ENCODE measurements at regions of chr15 and their contacts with region 1.

Region 1: GRCh38 chr15:31435261-31435911 is 108.8 kb downstream of the KLF13 start:
- DNase-seq: peak; percentile 82
- ATAC-seq: peak; percentile 87
- H3K4me3 Mint-ChIP-seq: no peak overlapping the region
- H3K27ac Mint-ChIP-seq: no peak overlapping the region
- H3K4me1 Mint-ChIP-seq: peaks cover 18% of the 10 kb centered on the region
- H3K27me3 Mint-ChIP-seq: peaks cover 8% of the 10 kb centered on the region
- CTCF ChIP-seq: 0 out of 2 replicates have a peak, but pooled peaks have one; percentile 27

Region 2: GRCh38 chr15:31200735-31201151 is 234.6 kb before region 1 on chr15:
- CTCF ChIA-PET with region 1: interaction called, 19 read pairs
- POLR2A ChIA-PET with region 1: no interaction called
- DNase-seq: peak; percentile 76
- ATAC-seq: peak; percentile 80
- H3K4me3 Mint-ChIP-seq: no peak overlapping the region
- H3K27ac Mint-ChIP-seq: no peak overlapping the region
- H3K4me1 Mint-ChIP-seq: peaks cover 14% of the 10 kb centered on the region
- H3K27me3 Mint-ChIP-seq: no peaks in the 10 kb centered on the region
- CTCF ChIP-seq: no peak

Region 3: GRCh38 chr15:31236184-31237042 is 199.0 kb before region 1 on chr15:
- CTCF ChIA-PET with region 1: interaction called, 11 read pairs
- POLR2A ChIA-PET with region 1: no interaction called
- DNase-seq: no peak
- ATAC-seq: no peak
- H3K4me3 Mint-ChIP-seq: no peak overlapping the region
- H3K27ac Mint-ChIP-seq: no peak overlapping the region
- H3K4me1 Mint-ChIP-seq: no peaks in the 10 kb centered on the region
- H3K27me3 Mint-ChIP-seq: peaks cover 5% of the 10 kb centered on the region; the same call in 1 of the 2 replicates
- CTCF ChIP-seq: no peak

Region 4: GRCh38 chr15:31254431-31255175 is 180.8 kb before region 1 on chr15:
- CTCF ChIA-PET with region 1: no interaction called
- POLR2A ChIA-PET with region 1: no interaction called
- DNase-seq: no peak
- ATAC-seq: no peak
- H3K4me3 Mint-ChIP-seq: no peak overlapping the region
- H3K27ac Mint-ChIP-seq: no peak overlapping the region
- H3K4me1 Mint-ChIP-seq: no peaks in the 10 kb centered on the region
- H3K27me3 Mint-ChIP-seq: no peaks in the 10 kb centered on the region
- CTCF ChIP-seq: no peak

Region 5: GRCh38 chr15:31326156-31326732 is 109.1 kb before region 1 on chr15:
- CTCF ChIA-PET with region 1: interaction called, 11 read pairs
- POLR2A ChIA-PET with region 1: interaction called, 3 read pairs
- DNase-seq: peak; percentile 99
- ATAC-seq: peak; percentile 85
- H3K4me3 Mint-ChIP-seq: peak overlapping the region; percentile 78
- H3K27ac Mint-ChIP-seq: no peak overlapping the region
- H3K4me1 Mint-ChIP-seq: peaks cover 39% of the 10 kb centered on the region
- H3K27me3 Mint-ChIP-seq: peaks cover 17% of the 10 kb centered on the region
- CTCF ChIP-seq: no peak

Region 6: GRCh38 chr15:31365655-31366127 is 69.7 kb before region 1 on chr15:
- CTCF ChIA-PET with region 1: interaction called, 66 read pairs
- POLR2A ChIA-PET with region 1: interaction called, 5 read pairs
- DNase-seq: peak; percentile 78
- ATAC-seq: peak; percentile 78
- H3K4me3 Mint-ChIP-seq: peak overlapping the region; percentile 41
- H3K27ac Mint-ChIP-seq: no peak overlapping the region
- H3K4me1 Mint-ChIP-seq: peaks cover 92% of the 10 kb centered on the region
- H3K27me3 Mint-ChIP-seq: no peaks in the 10 kb centered on the region
- CTCF ChIP-seq: no peak

Region 7: GRCh38 chr15:31396881-31397560 is 38.4 kb before region 1 on chr15:
- CTCF ChIA-PET with region 1: interaction called, 16 read pairs
- POLR2A ChIA-PET with region 1: interaction called, 3 read pairs
- DNase-seq: peak; percentile 96
- ATAC-seq: peak; percentile 89
- H3K4me3 Mint-ChIP-seq: peak overlapping the region; percentile 31
- H3K27ac Mint-ChIP-seq: peak overlapping the region; percentile 93
- H3K4me1 Mint-ChIP-seq: peaks cover 33% of the 10 kb centered on the region
- H3K27me3 Mint-ChIP-seq: peaks cover 23% of the 10 kb centered on the region
- CTCF ChIP-seq: no peak

Region 8: DNA sequence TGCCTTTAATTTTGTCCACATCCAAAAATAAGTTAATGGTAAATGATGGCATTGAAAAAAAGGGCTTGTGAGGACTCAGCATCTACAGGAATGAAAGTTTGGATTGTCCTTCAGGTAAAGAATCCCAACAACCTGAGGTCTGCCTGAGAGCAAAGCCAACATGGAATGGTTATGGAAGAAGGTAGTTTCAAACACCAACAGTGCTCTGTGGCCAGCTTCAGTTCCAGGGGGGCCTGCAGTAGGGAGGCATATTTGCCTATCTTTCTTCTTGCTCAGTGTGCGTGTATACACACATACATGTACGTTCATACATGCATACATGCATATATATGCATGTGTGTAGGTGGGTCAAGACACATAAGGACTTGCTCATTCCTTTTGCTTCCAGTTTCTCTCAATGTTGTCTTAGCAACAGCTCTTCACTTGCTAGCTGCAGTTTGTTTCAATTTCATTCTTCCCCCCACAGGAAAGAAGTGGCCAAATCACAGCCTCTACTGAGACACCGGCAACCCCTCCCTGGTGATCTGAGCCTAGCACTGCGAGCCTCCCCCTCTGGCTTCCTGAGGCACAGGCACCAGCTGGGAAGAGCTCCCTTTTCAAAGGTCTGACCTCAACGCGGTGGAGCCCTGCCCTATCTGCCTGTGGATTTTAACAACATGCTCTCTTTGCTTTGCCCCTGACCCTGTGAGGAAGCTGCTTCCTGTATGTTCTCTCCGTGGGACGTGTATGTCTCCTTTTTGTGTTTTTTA is 37.4 kb after region 1 on chr15:
- CTCF ChIA-PET with region 1: no interaction called
- POLR2A ChIA-PET with region 1: no interaction called
- DNase-seq: no peak
- ATAC-seq: peak; percentile 53; the same call in 1 of the 2 replicates
- H3K4me3 Mint-ChIP-seq: no peak overlapping the region
- H3K27ac Mint-ChIP-seq: no peak overlapping the region
- H3K4me1 Mint-ChIP-seq: peaks cover 6% of the 10 kb centered on the region
- H3K27me3 Mint-ChIP-seq: no peaks in the 10 kb centered on the region
- CTCF ChIP-seq: no peak

Region 9: DNA sequence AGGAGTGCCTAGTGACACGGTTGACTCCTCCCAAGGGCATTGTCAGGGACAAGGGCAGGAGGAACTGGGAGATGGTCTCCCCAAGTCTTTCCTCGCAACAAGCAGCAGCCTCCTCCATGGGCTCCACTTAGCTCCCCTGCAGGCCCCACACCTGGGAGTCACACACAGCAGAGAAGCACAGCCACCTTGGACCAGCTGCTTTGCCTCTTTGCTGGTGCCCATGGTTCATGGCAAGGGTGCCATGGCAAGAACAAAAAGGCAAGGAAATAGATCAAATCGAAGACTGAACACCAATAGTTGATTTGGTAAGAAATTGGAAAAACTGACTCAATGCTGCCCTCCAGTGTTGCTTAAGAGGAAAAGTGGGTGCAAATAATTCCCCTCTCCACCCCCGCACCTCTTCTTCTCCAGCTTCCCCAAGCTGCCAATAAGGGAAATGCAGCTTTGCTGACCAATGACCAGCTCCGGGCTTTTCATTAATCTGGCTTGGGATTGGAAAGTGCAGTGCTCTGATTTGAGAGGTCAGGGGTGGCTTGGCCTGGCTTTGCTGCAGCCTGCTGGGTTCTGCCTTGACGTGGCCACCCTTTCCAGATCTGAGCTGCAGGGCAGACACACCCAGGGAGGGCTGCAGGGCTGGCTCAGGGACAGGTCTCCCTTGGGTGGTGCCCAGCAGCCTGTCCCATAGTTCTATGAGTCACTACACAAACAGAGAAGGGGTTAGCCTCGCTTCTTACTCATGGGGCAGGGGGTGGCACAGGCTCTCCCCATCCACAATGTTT is 53.2 kb after region 1 on chr15:
- CTCF ChIA-PET with region 1: interaction called, 99 read pairs
- POLR2A ChIA-PET with region 1: no interaction called
- DNase-seq: peak; percentile 53
- ATAC-seq: peak; percentile 76
- H3K4me3 Mint-ChIP-seq: no peak overlapping the region
- H3K27ac Mint-ChIP-seq: no peak overlapping the region
- H3K4me1 Mint-ChIP-seq: peaks cover 5% of the 10 kb centered on the region; the same call in 1 of the 2 replicates
- H3K27me3 Mint-ChIP-seq: peaks cover 23% of the 10 kb centered on the region
- CTCF ChIP-seq: peak; percentile 71

Measured in WTC11 (cell line).